MCF 10A (cell line): ENCODE measurements at regions of chr14 and their contacts with region 1.

Region 1: DNA sequence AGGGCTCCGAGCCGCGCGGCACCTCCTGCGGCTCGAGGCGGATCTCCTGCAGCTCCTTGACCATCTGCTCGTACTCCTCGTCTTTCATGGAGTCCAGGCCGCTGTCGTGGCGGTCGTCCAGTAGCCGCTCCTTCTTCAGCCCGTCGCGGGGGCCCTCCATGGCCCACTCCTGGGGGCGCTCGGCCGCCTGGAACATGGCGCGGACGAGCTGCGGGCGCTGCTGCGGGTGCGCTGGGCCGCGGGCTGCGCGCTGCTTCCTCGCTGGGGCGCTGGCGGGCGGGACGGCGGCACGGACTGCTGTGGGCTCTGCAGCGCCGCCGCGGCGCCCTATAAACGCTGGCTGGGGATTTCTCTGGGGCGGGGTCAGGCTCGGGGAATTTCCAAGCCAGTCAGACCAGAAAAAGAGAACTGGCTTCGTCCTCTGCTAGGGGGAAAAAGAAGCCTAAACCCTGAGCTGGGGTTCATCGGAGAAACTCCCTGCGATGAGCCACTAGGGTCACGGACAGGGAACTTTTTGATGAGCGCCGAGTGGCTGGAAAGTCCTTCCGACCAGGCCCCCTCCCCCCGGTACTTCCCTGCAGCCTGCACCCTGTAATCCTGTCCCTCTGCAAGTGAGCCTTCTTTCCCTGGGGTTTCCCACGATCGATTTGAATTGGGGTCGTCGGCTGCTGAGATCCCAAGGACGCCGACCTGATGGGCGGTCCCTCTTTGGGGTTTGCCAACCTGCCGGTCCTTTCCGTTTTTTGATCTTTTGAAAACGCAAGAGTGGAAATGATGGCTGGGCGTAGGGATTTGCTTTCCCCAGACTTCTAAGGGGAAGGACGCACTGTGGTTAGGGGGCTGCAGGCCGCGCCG is at the start of gene NFKBIA:
- DNase-seq: peak; percentile 88
- H3K4me3 Mint-ChIP-seq: peak within 1 kb of the TSS; percentile 93
- H3K27ac Mint-ChIP-seq: peak within 1 kb of the TSS; percentile 96
- H3K4me1 Mint-ChIP-seq: peaks cover 33% of the 10 kb centered on the region
- H3K27me3 Mint-ChIP-seq: no peaks in the 10 kb centered on the region
- CTCF ChIP-seq: no peak
- total RNA-seq, gene NFKBIA: 74.5 and 112 TPM in 2 replicates

Region 2: DNA sequence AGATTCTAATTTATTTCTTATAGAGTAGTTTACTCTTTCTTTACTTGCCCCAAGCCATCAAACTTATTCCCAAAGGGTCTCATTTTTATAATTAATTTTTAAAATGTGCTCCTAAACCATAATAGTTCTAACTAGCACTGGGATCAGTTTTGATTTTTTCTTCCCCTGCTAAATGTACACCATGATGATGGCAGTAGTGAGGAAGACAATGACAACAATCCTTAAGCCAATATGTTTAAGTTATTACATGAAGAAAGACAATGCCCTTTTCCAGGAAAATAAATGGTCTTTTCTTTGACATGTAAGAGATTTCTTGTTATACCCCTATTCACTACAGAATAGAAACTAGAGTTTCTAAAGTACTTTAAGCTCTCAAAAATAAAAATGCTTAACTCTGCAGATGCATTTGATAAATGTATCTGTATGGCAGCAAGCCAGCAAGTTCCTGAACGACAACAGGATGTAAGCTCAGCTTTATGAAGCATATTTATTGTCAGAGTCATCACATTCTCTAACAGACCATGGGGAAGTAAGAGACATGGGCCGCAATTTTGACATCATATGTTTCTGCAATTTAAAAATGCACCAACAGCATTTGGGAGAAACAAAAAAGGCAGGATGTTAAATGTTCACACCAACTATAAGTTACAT is 738.8 kb before region 1 on chr14:
- CTCF ChIA-PET with region 1: no interaction called
- POLR2A ChIA-PET with region 1: no interaction called
- intact Hi-C with region 1: no loop called
- DNase-seq: peak; percentile 69
- H3K4me3 Mint-ChIP-seq: no peak overlapping the region
- H3K27ac Mint-ChIP-seq: peak overlapping the region; percentile 61
- H3K4me1 Mint-ChIP-seq: peaks cover 17% of the 10 kb centered on the region
- H3K27me3 Mint-ChIP-seq: no peaks in the 10 kb centered on the region
- CTCF ChIP-seq: no peak

Region 3: DNA sequence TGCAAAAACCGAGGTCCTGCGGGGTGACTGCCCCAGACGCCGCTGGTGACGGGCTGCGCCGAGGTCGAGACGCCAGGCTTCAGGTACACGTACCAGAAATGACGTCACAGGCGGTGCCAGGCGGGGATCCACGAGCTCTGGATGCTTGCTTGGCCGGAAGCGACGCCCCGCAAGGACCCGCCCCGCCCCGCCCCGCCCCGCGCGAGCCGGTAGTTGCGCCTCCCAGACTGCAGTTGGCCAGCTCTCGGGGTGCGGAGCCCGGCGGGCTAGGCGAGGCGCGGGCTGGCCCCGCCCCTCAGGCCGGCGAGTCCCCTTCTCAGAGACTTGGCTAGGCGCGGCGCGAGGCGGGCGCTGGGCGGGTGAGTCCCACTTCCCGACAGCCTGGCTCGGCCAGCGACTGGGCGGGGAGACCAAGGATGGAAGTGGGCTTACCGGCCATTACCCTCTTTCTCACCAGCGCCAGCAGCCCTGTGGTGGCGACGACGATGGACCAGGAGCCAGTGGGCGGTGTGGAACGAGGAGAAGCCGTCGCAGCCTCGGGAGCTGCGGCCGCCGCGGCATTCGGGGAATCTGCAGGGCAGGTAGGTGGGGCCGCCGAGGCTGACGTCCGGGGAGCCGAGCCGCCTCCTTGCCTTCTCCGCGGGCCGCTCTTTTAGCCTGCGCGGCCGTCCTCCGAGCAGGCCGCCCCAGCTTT is 358.5 kb before region 1 on chr14 and contains the start of gene FAM177A1:
- CTCF ChIA-PET with region 1: no interaction called
- POLR2A ChIA-PET with region 1: interaction called, 57 read pairs
- intact Hi-C with region 1: loop called (anchors 2 kb)
- DNase-seq: peak; percentile 97
- H3K4me3 Mint-ChIP-seq: peak within 1 kb of the TSS; percentile 94
- H3K27ac Mint-ChIP-seq: peak within 1 kb of the TSS; percentile 98
- H3K4me1 Mint-ChIP-seq: peaks cover 24% of the 10 kb centered on the region
- H3K27me3 Mint-ChIP-seq: no peaks in the 10 kb centered on the region
- CTCF ChIP-seq: no peak
- total RNA-seq, gene FAM177A1: 73.9 and 74.6 TPM in 2 replicates

Region 4: DNA sequence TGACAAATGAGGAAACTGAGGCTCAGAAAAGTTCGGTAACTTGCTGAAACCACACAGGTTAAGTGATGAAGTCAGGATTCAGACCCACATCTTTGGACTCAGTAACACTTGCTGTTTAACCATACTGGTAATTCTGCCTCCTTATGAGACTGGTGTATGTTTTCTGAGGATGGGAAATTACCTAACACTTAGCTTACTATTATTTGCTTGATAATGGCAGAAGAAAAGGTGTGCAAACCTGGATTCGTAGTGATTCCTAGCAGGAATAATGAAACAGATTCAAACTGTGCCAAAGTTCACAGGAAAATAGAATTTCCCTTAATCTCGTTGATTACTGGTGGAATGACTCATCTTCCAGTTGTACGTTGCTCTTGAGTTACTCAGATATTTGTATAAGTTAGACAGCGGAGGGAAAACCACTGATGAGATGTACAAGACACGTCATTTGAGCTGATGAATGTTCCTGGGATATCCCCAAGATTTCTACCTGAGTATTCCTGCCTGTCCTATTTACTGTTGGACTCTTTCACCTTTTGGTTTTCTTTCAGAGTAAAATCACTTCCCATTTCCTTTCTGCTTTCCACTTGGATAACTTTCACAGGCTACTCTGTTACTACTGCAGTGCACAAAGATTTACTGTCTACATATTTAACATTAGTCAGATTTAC is 244.8 kb before region 1 on chr14:
- CTCF ChIA-PET with region 1: interaction called, 3 read pairs
- POLR2A ChIA-PET with region 1: interaction called, 14 read pairs
- intact Hi-C with region 1: no loop called
- DNase-seq: peak; percentile 92
- H3K4me3 Mint-ChIP-seq: peak overlapping the region; percentile 52
- H3K27ac Mint-ChIP-seq: peak overlapping the region; percentile 96
- H3K4me1 Mint-ChIP-seq: peaks cover 48% of the 10 kb centered on the region
- H3K27me3 Mint-ChIP-seq: no peaks in the 10 kb centered on the region
- CTCF ChIP-seq: no peak

Region 5: DNA sequence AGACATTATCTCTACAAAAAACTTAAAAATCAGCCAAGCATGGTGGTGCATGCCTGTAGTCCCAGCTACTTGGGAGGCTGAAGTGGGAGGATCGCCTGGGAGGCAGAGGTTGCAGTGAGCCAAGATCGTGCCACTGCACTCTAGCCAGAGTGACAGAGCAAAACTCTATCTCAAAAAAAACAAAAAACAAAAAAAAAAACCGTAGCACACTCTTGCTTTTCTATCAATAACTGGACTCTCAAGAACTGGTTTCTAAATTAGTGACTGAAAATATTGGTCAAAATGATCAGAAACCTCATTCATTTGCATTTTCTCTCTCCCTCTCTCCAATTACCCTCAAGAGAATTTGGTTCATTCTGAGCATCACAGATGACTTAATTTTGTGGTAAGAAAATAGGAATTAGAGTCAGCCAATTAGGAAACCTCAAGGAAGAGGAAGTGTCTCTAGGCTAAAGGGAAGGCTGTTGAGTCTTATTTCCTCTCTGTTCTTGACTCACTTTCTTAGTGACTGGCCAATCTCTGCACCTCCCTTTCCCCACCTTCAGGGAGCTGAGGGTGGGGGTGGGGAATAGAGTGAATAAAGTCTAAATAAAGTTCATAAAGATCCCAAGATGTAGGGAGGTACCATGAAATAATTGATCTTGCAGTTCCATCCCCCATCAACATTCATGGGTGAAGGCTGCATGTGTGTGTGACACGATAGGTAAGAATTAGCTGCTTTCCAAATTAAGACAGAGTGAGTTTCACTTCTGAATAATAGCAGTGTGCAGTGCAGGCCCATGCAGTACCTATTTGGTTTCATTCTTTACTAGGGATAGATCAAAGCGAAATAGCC is 119.3 kb before region 1 on chr14:
- CTCF ChIA-PET with region 1: interaction called, 4 read pairs
- POLR2A ChIA-PET with region 1: interaction called, 178 read pairs
- intact Hi-C with region 1: no loop called
- DNase-seq: no peak
- H3K4me3 Mint-ChIP-seq: no peak overlapping the region
- H3K27ac Mint-ChIP-seq: peak overlapping the region; percentile 19
- H3K4me1 Mint-ChIP-seq: peaks cover 8% of the 10 kb centered on the region
- H3K27me3 Mint-ChIP-seq: no peaks in the 10 kb centered on the region
- CTCF ChIP-seq: no peak

Region 6: GRCh38 chr14:35320472-35320871 is 84.2 kb before region 1 on chr14:
- CTCF ChIA-PET with region 1: no interaction called
- POLR2A ChIA-PET with region 1: interaction called, 17 read pairs
- intact Hi-C with region 1: no loop called
- DNase-seq: no peak
- H3K4me3 Mint-ChIP-seq: no peak overlapping the region
- H3K27ac Mint-ChIP-seq: no peak overlapping the region
- H3K4me1 Mint-ChIP-seq: no peaks in the 10 kb centered on the region
- H3K27me3 Mint-ChIP-seq: no peaks in the 10 kb centered on the region
- CTCF ChIP-seq: no peak

Region 7: GRCh38 chr14:35374273-35374681 is 30.4 kb before region 1 on chr14:
- CTCF ChIA-PET with region 1: interaction called, 8 read pairs
- POLR2A ChIA-PET with region 1: interaction called, 348 read pairs
- intact Hi-C with region 1: loop called (anchors 1 kb)
- DNase-seq: peak; percentile 99
- H3K4me3 Mint-ChIP-seq: peak overlapping the region; percentile 4
- H3K27ac Mint-ChIP-seq: peak overlapping the region; percentile 92
- H3K4me1 Mint-ChIP-seq: peaks cover 12% of the 10 kb centered on the region
- H3K27me3 Mint-ChIP-seq: no peaks in the 10 kb centered on the region
- CTCF ChIP-seq: no peak